ENCODE measurements at regions of chr11 and their contacts with region 1.

Region 1: DNA sequence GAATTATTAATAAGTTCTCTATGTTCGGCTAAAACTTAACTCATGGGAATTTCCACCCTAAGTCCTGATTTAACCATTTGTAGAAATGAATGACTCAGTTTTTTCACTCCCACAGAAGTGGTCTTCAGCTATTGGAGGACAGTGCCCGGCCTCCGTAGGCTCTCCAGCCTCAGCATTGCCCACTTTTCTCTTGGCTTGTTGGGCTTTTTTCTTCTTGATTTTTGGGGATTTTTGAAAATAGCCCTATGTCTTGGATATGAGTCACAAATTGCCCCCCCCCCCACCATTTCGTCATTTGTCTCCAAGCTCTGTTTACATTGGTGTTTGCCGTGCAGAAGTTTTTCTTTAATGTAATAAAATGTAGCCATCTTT is 66.7 kb downstream of the PACS1 start:
- DNase-seq: no peak
- ATAC-seq: peak; percentile 36
- H3K4me3 ChIP-seq: peak overlapping the region; percentile 42; the same call in 1 of the 2 replicates
- H3K27ac ChIP-seq: peak overlapping the region; percentile 85
- H3K4me1 ChIP-seq: peaks cover 69% of the 10 kb centered on the region
- H3K27me3 ChIP-seq: no peaks in the 10 kb centered on the region
- CTCF ChIP-seq: no peak
- EP300 ChIP-seq: peak in 1 of 2 experiments; percentile 9; a peak in 1 of 4 replicates
- POLR2A ChIP-seq: no peak
- RAD21 ChIP-seq: no peak

Region 2: GRCh38 chr11:65773784-65774411 is 362.8 kb before region 1 on chr11:
- CTCF ChIA-PET with region 1: no interaction called
- POLR2A ChIA-PET with region 1: no interaction called
- RAD21 ChIA-PET with region 1: no interaction called
- SMC1A ChIA-PET with region 1: no interaction called
- in situ Hi-C with region 1: no loop called
- intact Hi-C with region 1: no loop called
- DNase-seq: no peak
- ATAC-seq: no peak
- H3K4me3 ChIP-seq: no peak overlapping the region
- H3K27ac ChIP-seq: no peak overlapping the region
- H3K4me1 ChIP-seq: peaks cover 3% of the 10 kb centered on the region; the same call in 1 of the 2 replicates
- H3K27me3 ChIP-seq: no peaks in the 10 kb centered on the region
- CTCF ChIP-seq: 0 out of 6 replicates have a peak, but pooled peaks of 1 of the 3 experiments have one; percentile 17
- EP300 ChIP-seq: no peak
- POLR2A ChIP-seq: no peak
- RAD21 ChIP-seq: 0 out of 2 replicates have a peak, but pooled peaks have one; percentile 9

Region 3: GRCh38 chr11:66022401-66023185 is 114.1 kb before region 1 on chr11:
- CTCF ChIA-PET with region 1: interaction called, 12 read pairs
- POLR2A ChIA-PET with region 1: interaction called, 4 read pairs
- RAD21 ChIA-PET with region 1: interaction called, 4 read pairs
- SMC1A ChIA-PET with region 1: interaction called, 5 read pairs
- in situ Hi-C with region 1: no loop called
- intact Hi-C with region 1: no loop called
- DNase-seq: no peak
- ATAC-seq: peak; percentile 95
- H3K4me3 ChIP-seq: no peak overlapping the region
- H3K27ac ChIP-seq: no peak overlapping the region
- H3K4me1 ChIP-seq: no peaks in the 10 kb centered on the region
- H3K27me3 ChIP-seq: 0 out of 4 replicates have a peak, but pooled peaks cover 0 to 3% of the 10 kb centered on the region in 2 experiments
- CTCF ChIP-seq: peak; percentile 84 to 97 (median 91)
- EP300 ChIP-seq: no peak
- POLR2A ChIP-seq: no peak
- RAD21 ChIP-seq: peak; percentile 60

Region 4: DNA sequence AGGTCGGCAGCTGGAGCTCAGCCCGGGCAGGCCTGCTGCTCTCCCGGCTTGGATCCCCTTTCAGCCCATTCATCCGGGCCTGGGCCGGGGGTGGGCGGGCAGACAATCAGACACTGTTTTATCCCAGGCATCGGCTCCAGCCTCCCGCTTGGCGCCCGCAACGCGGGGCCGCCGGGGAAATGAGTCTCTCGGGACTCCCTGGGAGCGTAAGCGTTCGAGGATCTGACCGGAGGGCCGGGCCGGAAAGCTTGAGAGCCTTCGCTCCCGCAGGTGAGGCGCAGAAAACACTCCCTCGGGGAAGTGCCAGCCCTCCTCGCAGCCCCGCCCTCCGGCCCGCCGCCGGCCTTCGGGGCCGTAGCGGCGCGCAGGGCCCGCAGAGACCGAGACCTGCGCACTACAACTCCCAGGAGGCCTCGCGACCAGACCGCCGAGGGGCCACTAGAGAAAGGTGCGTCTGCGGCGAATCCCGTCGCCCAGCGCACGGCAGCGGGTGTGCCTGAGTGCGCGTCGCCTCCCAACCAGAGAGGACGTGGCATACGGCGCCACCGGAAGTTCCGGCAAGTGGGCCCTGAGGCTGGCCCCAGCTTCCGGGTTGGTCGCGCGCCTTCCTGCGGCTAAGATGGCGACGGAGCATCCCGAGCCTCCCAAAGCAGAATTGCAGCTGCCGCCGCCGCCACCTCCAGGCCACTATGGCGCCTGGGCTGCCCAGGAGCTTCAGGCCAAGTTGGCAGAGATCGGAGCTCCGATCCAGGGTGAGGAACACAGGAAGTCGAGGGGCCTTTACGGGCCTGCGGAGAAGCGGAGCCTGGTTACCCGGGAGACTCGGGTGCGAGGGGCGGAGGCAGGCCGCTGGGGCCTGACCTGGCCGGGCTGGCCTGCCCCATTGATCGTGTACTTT is 84.7 kb before region 1 on chr11 and contains the start of gene SF3B2:
- CTCF ChIA-PET with region 1: interaction called, 33 read pairs
- POLR2A ChIA-PET with region 1: interaction called, 25 read pairs
- RAD21 ChIA-PET with region 1: interaction called, 27 read pairs
- SMC1A ChIA-PET with region 1: interaction called, 24 read pairs
- in situ Hi-C with region 1: no loop called
- intact Hi-C with region 1: no loop called
- DNase-seq: peak; percentile 96
- ATAC-seq: peak; percentile 98
- H3K4me3 ChIP-seq: peak within 1 kb of the TSS; percentile 98
- H3K27ac ChIP-seq: peak within 1 kb of the TSS; percentile 82
- H3K4me1 ChIP-seq: peaks cover 15% of the 10 kb centered on the region
- H3K27me3 ChIP-seq: no peaks in the 10 kb centered on the region
- CTCF ChIP-seq: no peak
- EP300 ChIP-seq: no peak
- POLR2A ChIP-seq: peak; percentile 97
- RAD21 ChIP-seq: no peak
- polyA plus RNA-seq, gene SF3B2: 56.3 to 123 TPM

Region 5: GRCh38 chr11:66081505-66081904 is 55.2 kb before region 1 on chr11:
- CTCF ChIA-PET with region 1: interaction called, 195 read pairs
- POLR2A ChIA-PET with region 1: interaction called, 12 read pairs
- RAD21 ChIA-PET with region 1: interaction called, 10 read pairs
- SMC1A ChIA-PET with region 1: interaction called, 37 read pairs
- in situ Hi-C with region 1: no loop called
- intact Hi-C with region 1: no loop called
- DNase-seq: no peak
- ATAC-seq: peak; percentile 93
- H3K4me3 ChIP-seq: peak overlapping the region; percentile 8; the same call in 1 of the 2 replicates
- H3K27ac ChIP-seq: peak overlapping the region; percentile 60
- H3K4me1 ChIP-seq: peaks cover 31% of the 10 kb centered on the region
- H3K27me3 ChIP-seq: no peaks in the 10 kb centered on the region
- CTCF ChIP-seq: no peak
- EP300 ChIP-seq: no peak
- POLR2A ChIP-seq: no peak
- RAD21 ChIP-seq: no peak

Region 6: GRCh38 chr11:66119348-66120133 is 17.2 kb before region 1 on chr11:
- CTCF ChIA-PET with region 1: interaction called, 38 read pairs
- POLR2A ChIA-PET with region 1: interaction called, 91 read pairs
- RAD21 ChIA-PET with region 1: interaction called, 78 read pairs
- SMC1A ChIA-PET with region 1: interaction called, 161 read pairs
- in situ Hi-C with region 1: no loop called
- intact Hi-C with region 1: no loop called
- DNase-seq: no peak
- ATAC-seq: peak; percentile 8; the same call in 1 of the 3 replicates
- H3K4me3 ChIP-seq: no peak overlapping the region
- H3K27ac ChIP-seq: no peak overlapping the region; the same call in 1 of the 2 replicates
- H3K4me1 ChIP-seq: peaks cover 51% of the 10 kb centered on the region
- H3K27me3 ChIP-seq: no peaks in the 10 kb centered on the region
- CTCF ChIP-seq: no peak
- EP300 ChIP-seq: no peak
- POLR2A ChIP-seq: no peak
- RAD21 ChIP-seq: no peak

Region 7: DNA sequence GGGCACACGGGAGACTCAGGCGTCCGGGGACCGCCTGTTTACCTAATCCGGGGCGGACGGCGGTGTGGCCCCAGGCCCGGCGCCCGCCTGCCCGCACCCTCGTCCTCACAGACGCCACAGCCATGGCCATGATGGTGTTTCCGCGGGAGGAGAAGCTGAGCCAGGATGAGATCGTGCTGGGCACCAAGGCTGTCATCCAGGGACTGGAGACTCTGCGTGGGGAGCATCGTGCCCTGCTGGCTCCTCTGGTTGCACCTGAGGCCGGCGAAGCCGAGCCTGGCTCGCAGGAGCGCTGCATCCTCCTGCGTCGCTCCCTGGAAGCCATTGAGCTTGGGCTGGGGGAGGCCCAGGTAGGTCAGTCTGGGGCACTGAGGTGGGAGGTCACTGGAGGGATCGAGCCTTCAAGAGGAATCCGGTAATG is 121.7 kb after region 1 on chr11:
- CTCF ChIA-PET with region 1: interaction called, 3 read pairs
- POLR2A ChIA-PET with region 1: interaction called, 6 read pairs
- RAD21 ChIA-PET with region 1: no interaction called
- SMC1A ChIA-PET with region 1: interaction called, 4 read pairs
- in situ Hi-C with region 1: no loop called
- intact Hi-C with region 1: loop called (anchors 2 kb)
- DNase-seq: no peak
- ATAC-seq: no peak; the same call in 1 of the 3 replicates
- H3K4me3 ChIP-seq: peak overlapping the region; percentile 81
- H3K27ac ChIP-seq: peak overlapping the region; percentile 95
- H3K4me1 ChIP-seq: peaks cover 7% of the 10 kb centered on the region
- H3K27me3 ChIP-seq: no peaks in the 10 kb centered on the region
- CTCF ChIP-seq: no peak
- EP300 ChIP-seq: no peak
- POLR2A ChIP-seq: peak; percentile 51; the same call in 1 of the 2 replicates
- RAD21 ChIP-seq: no peak

Region 8: DNA sequence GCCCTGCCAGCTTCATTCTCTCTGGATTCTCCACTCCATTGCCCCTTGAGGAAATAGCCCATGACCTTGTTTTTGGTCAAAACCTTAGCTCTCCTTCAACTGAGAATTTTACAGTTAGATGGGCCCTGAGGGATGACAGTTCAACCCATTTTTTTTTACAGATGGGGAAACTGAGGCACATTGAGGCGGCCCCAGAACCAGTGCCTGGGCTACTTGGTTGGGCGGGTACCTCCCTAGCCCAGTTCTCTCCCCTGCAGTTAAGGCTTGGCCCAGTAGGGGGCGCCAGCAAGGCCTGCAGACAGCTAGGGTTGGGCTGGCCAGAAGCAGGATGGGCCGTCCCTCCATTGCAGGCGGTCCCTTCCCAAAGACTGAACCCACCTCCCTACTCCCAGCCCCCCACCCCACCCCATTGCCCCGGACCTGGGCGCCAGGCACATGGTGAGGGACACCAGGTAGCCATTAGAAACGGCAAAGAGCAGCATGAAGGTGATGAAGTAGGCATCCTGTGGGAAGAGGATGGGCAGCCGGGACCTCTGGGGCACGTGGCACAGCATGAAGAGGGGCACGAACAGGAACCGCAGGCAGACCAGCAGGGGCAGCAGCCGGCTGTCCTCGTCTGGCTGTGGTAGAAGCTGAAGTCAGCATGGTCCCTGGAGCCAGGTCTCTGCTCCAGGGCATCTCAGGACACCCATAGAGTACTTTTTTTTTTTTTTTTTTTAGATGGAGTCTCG is 227.2 kb after region 1 on chr11:
- CTCF ChIA-PET with region 1: no interaction called
- POLR2A ChIA-PET with region 1: no interaction called
- RAD21 ChIA-PET with region 1: no interaction called
- SMC1A ChIA-PET with region 1: no interaction called
- in situ Hi-C with region 1: no loop called
- intact Hi-C with region 1: no loop called
- DNase-seq: no peak
- ATAC-seq: peak; percentile 88
- H3K4me3 ChIP-seq: no peak overlapping the region
- H3K27ac ChIP-seq: no peak overlapping the region
- H3K4me1 ChIP-seq: no peaks in the 10 kb centered on the region
- H3K27me3 ChIP-seq: no peaks in the 10 kb centered on the region
- CTCF ChIP-seq: peak; percentile 54 to 95 (median 89)
- EP300 ChIP-seq: no peak
- POLR2A ChIP-seq: no peak
- RAD21 ChIP-seq: 0 out of 2 replicates have a peak, but pooled peaks have one; percentile 14

Measured in GM12878 (cell line).